Natural killer cell (primary cell): ENCODE measurements at regions of chr2 and their contacts with region 1.

Region 1: DNA sequence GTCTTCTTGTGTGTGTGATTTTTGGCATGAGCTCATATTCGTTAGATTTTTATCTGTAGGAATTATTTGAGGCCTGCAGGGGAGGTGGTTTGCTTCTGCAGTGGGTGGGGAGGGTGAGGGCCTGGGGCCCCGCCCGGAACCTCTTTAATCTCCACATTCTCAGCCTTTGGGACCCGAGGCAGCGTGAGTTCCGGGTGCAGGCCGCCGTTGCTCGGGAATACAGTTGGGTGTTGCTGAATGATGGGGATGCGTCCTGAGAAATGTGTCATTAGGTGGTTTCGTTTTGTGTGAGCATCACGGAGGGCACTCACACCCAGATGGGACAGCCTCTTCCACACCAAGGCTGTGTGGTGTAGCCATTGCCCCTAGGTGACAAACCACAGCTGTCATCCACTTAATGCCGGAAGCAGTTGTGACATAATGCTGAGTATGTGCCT is 13.7 kb upstream of the GAL3ST2 start:
- DNase-seq: peak; percentile 86 to 90
- ATAC-seq: peak; percentile 65 to 86 (median 79)
- H3K4me3 ChIP-seq: peak overlapping the region; percentile 17
- H3K4me3 Mint-ChIP-seq: peak overlapping the region; percentile 93
- H3K27ac ChIP-seq: peak overlapping the region; percentile 81
- H3K27ac Mint-ChIP-seq: peak overlapping the region; percentile 94 to 96
- H3K4me1 ChIP-seq: peaks cover 42% of the 10 kb centered on the region
- H3K4me1 Mint-ChIP-seq: peaks cover 35 to 41% of the 10 kb centered on the region in 2 donors
- H3K27me3 ChIP-seq: peaks cover 4% of the 10 kb centered on the region
- H3K27me3 Mint-ChIP-seq: peaks cover 0 to 9% of the 10 kb centered on the region in 2 donors
- CTCF ChIP-seq: no peak

Region 2: GRCh38 chr2:240560480-240561326 is 1202.2 kb before region 1 on chr2:
- intact Hi-C with region 1: loop called (anchors 2 kb)
- DNase-seq: peak; percentile 98 to 99
- ATAC-seq: peak; percentile 64 to 85 (median 67)
- H3K4me3 ChIP-seq: peak overlapping the region; percentile 62
- H3K4me3 Mint-ChIP-seq: peak overlapping the region; percentile 93
- H3K27ac ChIP-seq: peak overlapping the region; percentile 96
- H3K27ac Mint-ChIP-seq: peak overlapping the region; percentile 99
- H3K4me1 ChIP-seq: peaks cover 78% of the 10 kb centered on the region
- H3K4me1 Mint-ChIP-seq: peaks cover 60 to 76% of the 10 kb centered on the region in 2 donors
- H3K27me3 ChIP-seq: no peaks in the 10 kb centered on the region
- H3K27me3 Mint-ChIP-seq: no peaks in the 10 kb centered on the region
- CTCF ChIP-seq: peak; percentile 39

Region 3: DNA sequence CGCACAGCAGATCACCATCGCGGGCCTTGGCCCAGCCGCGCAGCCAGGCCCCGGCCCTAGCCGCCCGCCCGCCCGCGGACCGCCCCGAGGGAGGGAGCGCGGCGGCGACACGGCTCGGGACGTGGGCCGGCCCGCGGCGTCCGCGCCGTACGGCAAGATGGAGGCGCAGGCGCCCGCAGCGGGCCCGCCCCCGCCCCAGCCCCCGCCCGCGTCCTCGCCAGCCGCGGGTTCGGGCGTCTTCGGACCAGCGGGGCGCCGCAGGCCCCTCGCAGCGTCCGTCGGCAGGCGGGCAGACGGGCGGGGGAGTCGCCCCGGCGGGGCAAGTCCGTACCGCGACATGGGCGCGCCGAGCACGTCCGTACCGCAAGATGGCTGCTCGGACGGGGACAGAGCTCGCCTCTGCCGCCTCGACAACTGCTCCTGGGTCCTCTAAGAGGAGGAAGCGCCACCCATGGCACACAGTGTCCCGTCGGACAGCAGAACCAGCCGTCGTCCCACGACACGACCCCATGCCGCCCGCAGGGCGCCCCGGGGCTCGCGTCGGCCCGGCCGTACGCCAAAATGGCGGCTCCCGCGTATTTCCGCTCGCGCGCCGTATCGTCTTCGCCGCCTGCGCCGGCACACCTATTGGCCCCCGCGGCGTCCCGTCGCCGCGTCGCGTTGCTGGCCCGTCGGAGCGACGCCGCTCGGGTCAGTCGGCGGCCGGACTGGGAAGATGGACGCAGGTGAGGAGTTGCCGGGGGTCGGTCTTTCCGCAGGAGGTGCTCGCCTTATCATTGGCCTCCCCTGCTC is 125.8 kb before region 1 on chr2 and contains the starts of genes ATG4B and THAP4:
- intact Hi-C with region 1: no loop called
- DNase-seq: peak; percentile 79 to 88
- ATAC-seq: peak; percentile 73 to 86 (median 80)
- H3K4me3 ChIP-seq: peak within 1 kb of the TSS; percentile 97
- H3K4me3 Mint-ChIP-seq: peak within 1 kb of the TSS; percentile 93
- H3K27ac ChIP-seq: peak within 1 kb of the TSS; percentile 97
- H3K27ac Mint-ChIP-seq: peak within 1 kb of the TSS; percentile 81 to 91
- H3K4me1 ChIP-seq: peaks cover 35% of the 10 kb centered on the region
- H3K4me1 Mint-ChIP-seq: peaks cover 48 to 51% of the 10 kb centered on the region in 2 donors
- H3K27me3 ChIP-seq: no peaks in the 10 kb centered on the region
- H3K27me3 Mint-ChIP-seq: no peaks in the 10 kb centered on the region
- CTCF ChIP-seq: no peak
- total RNA-seq, gene ATG4B: 106 to 171 (median 139) TPM
- total RNA-seq, gene THAP4: 19.8 to 29.2 (median 27.8) TPM

Region 4: DNA sequence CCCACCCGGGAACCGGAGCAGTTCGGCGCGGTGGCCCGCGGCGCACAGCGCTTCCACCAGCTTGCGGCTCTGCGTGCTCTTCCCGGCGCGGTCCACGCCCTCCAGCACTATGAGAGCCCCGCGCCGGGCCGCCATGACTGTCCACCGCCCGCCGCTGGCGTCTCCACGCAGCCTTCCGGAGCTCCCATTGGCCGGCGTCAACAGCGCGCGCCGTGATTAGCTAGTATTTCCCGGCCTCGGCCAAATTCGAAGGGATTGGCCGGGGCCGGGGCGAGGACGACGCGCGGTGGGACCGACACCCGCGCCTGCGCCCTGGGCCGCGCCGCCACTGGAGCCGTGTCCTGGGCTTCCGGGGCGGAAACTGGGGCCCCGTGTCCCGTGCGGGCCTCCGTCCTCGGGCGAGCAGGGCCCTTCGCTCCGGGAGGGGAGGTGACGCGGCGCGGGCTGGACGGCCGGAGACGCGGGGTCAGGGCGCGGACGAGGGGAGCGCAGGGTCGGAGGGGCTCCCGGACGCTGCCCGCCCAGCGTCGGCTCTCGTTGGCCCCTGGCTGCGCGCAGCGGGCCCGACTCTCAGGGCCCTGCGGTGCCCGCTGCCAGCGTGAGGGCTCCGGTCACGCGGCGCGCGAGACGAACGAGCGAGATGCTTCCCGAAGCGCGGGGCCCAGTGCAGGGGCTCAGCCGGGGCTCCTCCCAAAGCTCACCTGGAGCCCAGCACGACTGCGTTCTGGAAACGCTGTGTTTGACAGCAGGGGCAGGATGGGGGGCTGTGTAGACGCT is 76.1 kb before region 1 on chr2 and contains the start of gene DTYMK:
- intact Hi-C with region 1: loop called (anchors 5 kb)
- DNase-seq: peak; percentile 96 to 97
- ATAC-seq: peak; percentile 93 to 98 (median 93)
- H3K4me3 ChIP-seq: peak within 1 kb of the TSS; percentile 84
- H3K4me3 Mint-ChIP-seq: peak within 1 kb of the TSS; percentile 94
- H3K27ac ChIP-seq: peak within 1 kb of the TSS; percentile 55
- H3K27ac Mint-ChIP-seq: peak within 1 kb of the TSS; percentile 87 to 88
- H3K4me1 ChIP-seq: peaks cover 18% of the 10 kb centered on the region
- H3K4me1 Mint-ChIP-seq: peaks cover 26 to 28% of the 10 kb centered on the region in 2 donors
- H3K27me3 ChIP-seq: no peaks in the 10 kb centered on the region
- H3K27me3 Mint-ChIP-seq: no peaks in the 10 kb centered on the region
- CTCF ChIP-seq: no peak
- total RNA-seq, gene DTYMK: 15.4 to 17.5 (median 15.6) TPM

Region 5: DNA sequence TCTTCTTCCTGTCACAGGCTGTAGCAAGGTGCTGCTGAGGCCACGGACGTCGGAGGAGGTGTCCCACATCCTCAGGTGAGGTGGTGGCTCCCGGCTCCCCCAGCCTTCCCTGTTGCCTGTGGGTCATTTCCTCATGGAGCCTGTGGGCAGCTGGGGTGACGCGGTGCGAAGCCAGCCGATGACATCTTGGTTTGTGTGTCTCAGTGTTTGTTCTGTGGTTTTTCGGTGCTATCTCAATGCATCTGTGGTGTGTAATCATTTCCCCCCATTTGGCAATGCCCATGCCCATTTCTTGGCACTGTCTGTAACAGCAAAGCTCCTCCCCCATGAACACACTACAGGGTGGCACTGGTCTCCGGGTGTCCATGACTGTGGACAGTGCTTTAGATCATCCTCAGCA is 21.9 kb before region 1 on chr2:
- intact Hi-C with region 1: loop called (anchors 2 kb)
- DNase-seq: peak in 1 of 2 donors; percentile 61
- ATAC-seq: peak; percentile 76 to 82 (median 82)
- H3K4me3 ChIP-seq: no peak overlapping the region
- H3K4me3 Mint-ChIP-seq: peak overlapping the region; percentile 56
- H3K27ac ChIP-seq: no peak overlapping the region
- H3K27ac Mint-ChIP-seq: peak overlapping the region in 1 of 2 donors; percentile 33
- H3K4me1 ChIP-seq: peaks cover 32% of the 10 kb centered on the region
- H3K4me1 Mint-ChIP-seq: peaks cover 19 to 25% of the 10 kb centered on the region in 2 donors
- H3K27me3 ChIP-seq: peaks cover 6% of the 10 kb centered on the region
- H3K27me3 Mint-ChIP-seq: no peaks in the 10 kb centered on the region
- CTCF ChIP-seq: no peak

Region 6: GRCh38 chr2:241844066-241844728 is 81.2 kb after region 1 on chr2:
- intact Hi-C with region 1: loop called (anchors 2 kb)
- DNase-seq: peak; percentile 71 to 83
- ATAC-seq: peak; percentile 67 to 78 (median 73)
- H3K4me3 ChIP-seq: peak overlapping the region; percentile 27
- H3K4me3 Mint-ChIP-seq: peak overlapping the region; percentile 82
- H3K27ac ChIP-seq: no peak overlapping the region
- H3K27ac Mint-ChIP-seq: peak overlapping the region; percentile 43 to 71
- H3K4me1 ChIP-seq: peaks cover 35% of the 10 kb centered on the region
- H3K4me1 Mint-ChIP-seq: peaks cover 46 to 47% of the 10 kb centered on the region in 2 donors
- H3K27me3 ChIP-seq: no peaks in the 10 kb centered on the region
- H3K27me3 Mint-ChIP-seq: peaks cover 10 to 16% of the 10 kb centered on the region in 2 donors
- CTCF ChIP-seq: no peak

Region 7: GRCh38 chr2:241865957-241866789 is 103.2 kb after region 1 on chr2:
- intact Hi-C with region 1: loop called (anchors 2 kb)
- DNase-seq: no peak
- ATAC-seq: peak in 1 of 3 donors; percentile 5
- H3K4me3 ChIP-seq: no peak overlapping the region
- H3K4me3 Mint-ChIP-seq: peak overlapping the region; percentile 6
- H3K27ac ChIP-seq: no peak overlapping the region
- H3K27ac Mint-ChIP-seq: peak overlapping the region in 1 of 2 donors; percentile 45
- H3K4me1 ChIP-seq: peaks cover 89% of the 10 kb centered on the region
- H3K4me1 Mint-ChIP-seq: peaks cover 48 to 72% of the 10 kb centered on the region in 2 donors
- H3K27me3 ChIP-seq: peaks cover 19% of the 10 kb centered on the region
- H3K27me3 Mint-ChIP-seq: peaks cover 0 to 32% of the 10 kb centered on the region in 2 donors
- CTCF ChIP-seq: no peak